Activated CD4-positive, alpha-beta memory T cell treated with anti-CD3 and anti-CD28 coated beads for 36 hours (primary cell): ENCODE measurements at regions of chr10 and their contacts with region 1.

Region 1: GRCh38 chr10:122515588-122516231 is 44.8 kb upstream of the DMBT1 start:
- DNase-seq: peak; percentile 80
- H3K4me3 Mint-ChIP-seq: no peak overlapping the region
- H3K27ac Mint-ChIP-seq: no peak overlapping the region
- H3K4me1 Mint-ChIP-seq: peaks cover 34% of the 10 kb centered on the region
- H3K27me3 Mint-ChIP-seq: peaks cover 3% of the 10 kb centered on the region

Region 2: DNA sequence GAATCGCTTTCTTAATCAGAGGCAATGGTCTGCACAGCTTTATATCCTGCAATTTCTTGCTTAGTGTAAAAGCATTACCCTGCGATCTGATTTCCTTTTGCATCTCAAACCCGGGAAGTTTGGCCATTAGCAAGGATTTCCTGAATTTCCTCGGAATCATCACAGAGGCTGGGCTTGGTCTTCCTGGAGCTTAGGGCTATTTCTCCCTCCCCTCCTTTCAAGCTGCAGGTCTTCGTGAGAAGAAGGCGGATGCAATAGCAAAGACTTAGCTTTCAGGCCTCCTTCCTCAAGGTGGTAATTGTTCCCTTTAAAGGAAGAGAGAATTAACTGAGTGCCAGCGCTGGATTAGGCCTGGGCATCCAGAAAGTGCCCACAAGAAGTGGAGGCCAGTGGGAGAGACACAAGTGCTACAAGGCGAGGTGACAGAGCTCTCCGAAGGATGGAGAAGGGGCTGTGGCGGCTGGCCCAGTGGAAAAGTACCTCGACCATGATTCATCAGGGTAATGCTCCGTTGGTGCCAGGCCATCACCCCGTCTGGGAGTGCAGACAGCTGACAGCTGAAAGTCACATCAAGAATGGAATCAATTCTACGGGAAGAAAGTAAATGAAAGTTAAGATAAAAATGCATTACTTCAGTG is 65.2 kb before region 1 on chr10:
- CTCF ChIA-PET with region 1: no interaction called
- POLR2A ChIA-PET with region 1: no interaction called
- intact Hi-C with region 1: no loop called
- DNase-seq: no peak
- H3K4me3 Mint-ChIP-seq: no peak overlapping the region
- H3K27ac Mint-ChIP-seq: no peak overlapping the region
- H3K4me1 Mint-ChIP-seq: no peaks in the 10 kb centered on the region
- H3K27me3 Mint-ChIP-seq: peaks cover 16% of the 10 kb centered on the region

Region 3: GRCh38 chr10:122461367-122461728 is 54.4 kb before region 1 on chr10 and contains the start of gene HTRA1:
- CTCF ChIA-PET with region 1: no interaction called
- POLR2A ChIA-PET with region 1: no interaction called
- intact Hi-C with region 1: no loop called
- DNase-seq: peak; percentile 20
- H3K4me3 Mint-ChIP-seq: peak within 1 kb of the TSS; percentile 68
- H3K27ac Mint-ChIP-seq: no peak within 1 kb of the TSS
- H3K4me1 Mint-ChIP-seq: peaks cover 11% of the 10 kb centered on the region
- H3K27me3 Mint-ChIP-seq: peaks cover 59% of the 10 kb centered on the region
- total RNA-seq, gene HTRA1: not detected

Region 4: DNA sequence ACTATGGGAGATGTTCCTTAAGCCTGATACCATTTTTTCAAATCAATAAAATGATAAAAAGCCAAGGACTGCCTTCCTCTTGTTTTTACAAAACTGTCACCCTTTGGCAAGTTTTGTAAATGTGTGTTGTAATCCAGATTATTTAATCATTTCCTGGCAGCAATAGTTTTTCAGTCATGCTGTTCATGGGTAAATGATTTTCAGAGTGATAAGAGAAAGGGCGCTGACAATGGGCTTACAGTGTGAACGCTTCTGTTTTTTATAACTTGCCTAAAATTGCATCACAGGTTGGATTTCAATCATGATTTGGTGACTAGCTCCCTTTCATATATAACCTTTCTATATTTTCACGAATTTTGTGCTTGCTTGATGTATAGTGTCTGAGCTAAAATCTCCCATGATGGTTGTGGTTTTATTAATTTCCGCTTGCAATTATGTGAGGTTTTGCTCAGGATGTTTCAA is 25.9 kb after region 1 on chr10:
- CTCF ChIA-PET with region 1: no interaction called
- POLR2A ChIA-PET with region 1: interaction called, 3 read pairs
- intact Hi-C with region 1: loop called (anchors 1 kb)
- DNase-seq: no peak
- H3K4me3 Mint-ChIP-seq: no peak overlapping the region
- H3K27ac Mint-ChIP-seq: no peak overlapping the region
- H3K4me1 Mint-ChIP-seq: peaks cover 47% of the 10 kb centered on the region
- H3K27me3 Mint-ChIP-seq: no peaks in the 10 kb centered on the region

Region 5: DNA sequence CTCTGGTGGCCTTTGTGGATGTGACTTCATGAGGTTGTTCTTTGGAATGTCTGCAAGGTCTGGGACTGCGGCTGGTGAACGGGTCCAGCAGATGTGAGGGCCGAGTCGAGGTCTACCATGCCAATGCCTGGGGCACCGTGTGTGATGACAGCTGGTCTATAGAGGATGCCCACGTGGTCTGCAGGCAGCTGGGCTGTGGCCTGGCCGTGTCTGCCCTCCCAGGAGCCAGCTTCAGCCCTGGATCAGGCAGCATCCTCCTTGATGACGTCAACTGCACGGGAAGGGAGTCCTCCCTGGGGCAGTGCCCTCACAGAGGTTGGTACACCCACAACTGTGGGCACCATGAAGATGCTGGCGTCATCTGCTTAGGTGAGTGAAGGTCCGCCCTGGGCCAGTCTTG is 283.0 kb after region 1 on chr10:
- CTCF ChIA-PET with region 1: no interaction called
- POLR2A ChIA-PET with region 1: no interaction called
- intact Hi-C with region 1: no loop called
- DNase-seq: no peak
- H3K4me3 Mint-ChIP-seq: no peak overlapping the region
- H3K27ac Mint-ChIP-seq: no peak overlapping the region
- H3K4me1 Mint-ChIP-seq: no peaks in the 10 kb centered on the region
- H3K27me3 Mint-ChIP-seq: peaks cover 14% of the 10 kb centered on the region